Activated CD8-positive, alpha-beta T cell treated with anti-CD3 and anti-CD28 coated beads for 36 hours (primary cell): ENCODE measurements at regions of chr19 and their contacts with region 1.

Region 1: DNA sequence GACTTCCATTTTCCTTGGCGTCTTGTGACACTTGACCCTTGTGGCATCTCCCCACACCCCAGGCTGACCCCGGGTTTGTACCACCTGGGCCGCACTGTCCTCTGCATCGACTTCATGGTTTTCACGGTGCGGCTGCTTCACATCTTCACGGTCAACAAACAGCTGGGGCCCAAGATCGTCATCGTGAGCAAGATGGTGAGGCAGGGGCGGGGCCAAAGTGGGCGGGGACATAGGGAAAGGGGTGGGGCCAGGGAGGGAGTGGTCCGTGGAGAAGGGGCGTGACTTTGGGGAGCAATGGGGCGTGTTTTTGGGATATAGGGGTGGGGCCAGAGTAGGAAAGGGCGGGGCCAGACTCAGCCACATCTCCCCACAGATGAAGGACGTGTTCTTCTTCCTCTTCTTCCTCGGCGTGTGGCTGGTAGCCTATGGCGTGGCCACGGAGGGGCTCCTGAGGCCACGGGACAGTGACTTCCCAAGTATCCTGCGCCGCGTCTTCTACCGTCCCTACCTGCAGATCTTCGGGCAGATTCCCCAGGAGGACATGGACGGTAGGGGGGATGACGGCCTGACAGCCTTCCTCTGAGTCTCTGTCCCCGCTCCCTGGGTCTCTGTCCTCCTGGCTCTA is 42.8 kb downstream of the TRPM4 start:
- DNase-seq: peak; percentile 36
- ATAC-seq: peak; percentile 71
- H3K4me3 Mint-ChIP-seq: no peak overlapping the region
- H3K27ac Mint-ChIP-seq: no peak overlapping the region
- H3K4me1 Mint-ChIP-seq: peaks cover 2% of the 10 kb centered on the region
- H3K27me3 Mint-ChIP-seq: no peaks in the 10 kb centered on the region
- CTCF ChIP-seq: no peak

Region 2: GRCh38 chr19:49106648-49107135 is 93.7 kb before region 1 on chr19:
- CTCF ChIA-PET with region 1: interaction called, 19 read pairs
- POLR2A ChIA-PET with region 1: no interaction called
- intact Hi-C with region 1: no loop called
- DNase-seq: peak; percentile 77
- ATAC-seq: peak; percentile 68
- H3K4me3 Mint-ChIP-seq: no peak overlapping the region
- H3K27ac Mint-ChIP-seq: peak overlapping the region; percentile 26
- H3K4me1 Mint-ChIP-seq: peaks cover 7% of the 10 kb centered on the region
- H3K27me3 Mint-ChIP-seq: no peaks in the 10 kb centered on the region
- CTCF ChIP-seq: peak; percentile 91

Region 3: DNA sequence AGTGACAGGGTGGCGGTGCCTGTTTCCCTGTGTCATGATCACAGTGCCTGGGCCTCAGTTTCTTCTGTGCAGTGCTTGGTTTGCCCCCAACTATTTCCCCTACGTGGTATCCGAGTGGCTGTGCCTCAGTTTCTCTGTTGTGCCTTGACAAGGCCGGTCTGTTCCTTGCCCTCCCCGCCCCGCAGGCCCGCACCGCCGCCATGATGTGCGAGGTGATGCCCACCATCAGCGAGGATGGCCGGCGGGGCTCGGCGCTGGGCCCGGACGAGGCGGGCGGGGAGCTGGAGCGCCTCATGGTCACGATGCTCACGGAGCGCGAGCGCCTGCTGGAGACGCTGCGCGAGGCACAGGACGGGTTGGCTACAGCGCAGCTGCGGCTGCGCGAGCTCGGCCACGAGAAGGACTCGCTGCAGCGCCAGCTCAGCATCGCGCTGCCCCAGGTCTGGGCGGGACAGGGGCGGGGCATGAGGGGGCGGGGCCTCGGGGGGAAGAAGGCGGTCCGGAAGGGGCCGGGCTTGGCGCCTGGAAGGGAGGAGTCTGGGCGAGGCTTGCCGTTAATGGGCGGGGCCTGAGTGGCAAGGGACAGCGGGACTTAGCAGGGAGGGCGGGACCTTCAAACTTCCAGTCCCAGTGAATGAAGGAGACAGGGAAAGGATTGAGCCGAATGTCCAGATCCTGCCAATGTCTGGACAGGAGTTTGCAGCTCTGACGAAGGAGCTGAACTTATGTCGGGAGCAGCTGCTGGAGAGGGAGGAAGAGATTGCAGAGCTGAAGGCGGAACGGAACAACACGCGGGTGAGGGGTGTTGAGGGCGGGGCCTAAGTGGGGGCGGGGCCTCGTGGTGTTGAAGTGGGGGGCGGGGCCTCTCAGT is 72.4 kb before region 1 on chr19:
- CTCF ChIA-PET with region 1: interaction called, 16 read pairs
- POLR2A ChIA-PET with region 1: no interaction called
- intact Hi-C with region 1: no loop called
- DNase-seq: peak; percentile 95
- ATAC-seq: peak; percentile 98
- H3K4me3 Mint-ChIP-seq: peak overlapping the region; percentile 82
- H3K27ac Mint-ChIP-seq: peak overlapping the region; percentile 87
- H3K4me1 Mint-ChIP-seq: peaks cover 8% of the 10 kb centered on the region
- H3K27me3 Mint-ChIP-seq: no peaks in the 10 kb centered on the region
- CTCF ChIP-seq: no peak

Region 4: DNA sequence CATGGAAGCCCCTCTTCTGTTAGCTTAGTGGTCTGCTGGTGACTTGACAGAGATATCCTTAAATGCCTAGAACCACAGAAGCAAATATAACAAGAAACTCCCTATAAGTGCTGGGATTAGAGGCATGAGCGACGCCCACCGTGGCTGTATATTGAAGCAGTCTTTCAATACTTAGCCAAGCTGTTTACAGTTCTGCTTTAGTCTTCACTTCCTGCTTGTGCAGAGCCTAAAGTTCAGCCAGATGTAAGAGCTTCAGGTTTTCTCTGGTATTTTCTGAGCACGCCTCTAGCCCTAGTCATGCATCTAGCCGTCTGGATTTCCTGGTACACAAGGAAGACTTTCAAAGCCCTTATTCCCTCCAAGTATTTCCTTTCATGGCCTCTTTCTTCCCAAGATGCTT is 14.2 kb before region 1 on chr19:
- CTCF ChIA-PET with region 1: interaction called, 26 read pairs
- POLR2A ChIA-PET with region 1: no interaction called
- intact Hi-C with region 1: no loop called
- DNase-seq: no peak
- ATAC-seq: no peak
- H3K4me3 Mint-ChIP-seq: no peak overlapping the region
- H3K27ac Mint-ChIP-seq: no peak overlapping the region
- H3K4me1 Mint-ChIP-seq: peaks cover 7% of the 10 kb centered on the region
- H3K27me3 Mint-ChIP-seq: no peaks in the 10 kb centered on the region
- CTCF ChIP-seq: no peak

Region 5: GRCh38 chr19:49224856-49225255 is 24.5 kb after region 1 on chr19:
- CTCF ChIA-PET with region 1: interaction called, 18 read pairs
- POLR2A ChIA-PET with region 1: no interaction called
- intact Hi-C with region 1: no loop called
- DNase-seq: peak; percentile 65
- ATAC-seq: peak; percentile 67
- H3K4me3 Mint-ChIP-seq: no peak overlapping the region
- H3K27ac Mint-ChIP-seq: no peak overlapping the region
- H3K4me1 Mint-ChIP-seq: peaks cover 4% of the 10 kb centered on the region
- H3K27me3 Mint-ChIP-seq: peaks cover 10% of the 10 kb centered on the region
- CTCF ChIP-seq: peak; percentile 42

Region 6: DNA sequence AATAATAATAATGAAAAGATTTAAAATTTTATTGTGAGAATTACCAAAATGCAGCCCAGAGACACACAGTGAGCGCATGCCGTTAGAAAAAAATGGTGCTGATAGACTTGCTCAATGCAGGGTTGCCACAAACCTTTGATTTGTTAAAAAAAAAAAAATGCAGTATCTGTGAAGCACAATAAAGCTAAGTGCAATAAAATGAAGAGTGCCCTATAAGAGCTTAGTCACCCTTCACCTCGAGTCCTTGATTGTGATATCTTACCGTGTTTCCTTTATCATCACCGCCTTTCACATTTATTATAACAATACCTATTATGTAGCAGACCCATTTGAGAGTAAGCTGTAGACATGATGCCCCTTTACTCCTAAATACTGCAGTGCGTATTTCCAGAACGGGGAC is 41.4 kb after region 1 on chr19:
- CTCF ChIA-PET with region 1: no interaction called
- POLR2A ChIA-PET with region 1: no interaction called
- intact Hi-C with region 1: no loop called
- DNase-seq: no peak
- ATAC-seq: no peak
- H3K4me3 Mint-ChIP-seq: no peak overlapping the region
- H3K27ac Mint-ChIP-seq: no peak overlapping the region
- H3K4me1 Mint-ChIP-seq: no peaks in the 10 kb centered on the region
- H3K27me3 Mint-ChIP-seq: peaks cover 7% of the 10 kb centered on the region
- CTCF ChIP-seq: no peak